Activated naive CD4-positive, alpha-beta T cell treated with anti-CD3 and anti-CD28 coated beads for 36 hours (primary cell): ENCODE measurements at regions of chr4 and their contacts with region 1.

Region 1: DNA sequence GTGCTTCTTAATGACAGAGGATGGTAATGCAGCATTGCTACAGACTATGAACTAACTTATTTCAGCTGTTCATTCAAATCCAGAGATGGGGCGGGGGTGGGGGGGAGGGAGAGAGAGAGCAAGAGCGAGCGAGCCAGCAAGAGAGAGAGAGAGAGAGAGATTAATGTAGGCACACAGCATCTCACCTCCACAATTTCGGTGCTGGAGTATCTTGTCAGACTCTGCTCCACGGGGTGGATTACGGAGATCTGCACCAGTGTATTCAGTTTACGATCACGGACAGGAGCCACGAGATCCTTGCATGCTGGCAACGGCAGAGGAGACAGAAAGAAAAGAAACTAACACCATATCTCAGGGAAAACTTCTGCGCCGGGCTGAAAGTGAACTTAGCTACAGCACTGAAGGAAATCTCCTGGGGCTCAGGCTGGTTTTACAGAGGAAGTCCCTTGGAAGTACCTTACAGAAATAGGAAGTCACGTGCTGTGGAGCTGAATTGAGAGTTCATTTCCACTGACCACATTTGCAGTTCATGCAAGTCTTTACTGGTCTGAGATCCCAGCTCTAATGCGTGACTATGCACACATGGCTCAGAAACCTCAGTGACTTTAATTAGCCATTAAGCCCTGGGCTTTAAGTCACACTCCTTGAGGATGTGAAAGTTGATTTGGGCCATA is 440.9 kb downstream of the INPP4B start:
- DNase-seq: peak; percentile 75
- H3K4me3 Mint-ChIP-seq: peak overlapping the region; percentile 99
- H3K27ac Mint-ChIP-seq: peak overlapping the region; percentile 100
- H3K4me1 Mint-ChIP-seq: peaks cover 53% of the 10 kb centered on the region
- H3K27me3 Mint-ChIP-seq: no peaks in the 10 kb centered on the region

Region 2: DNA sequence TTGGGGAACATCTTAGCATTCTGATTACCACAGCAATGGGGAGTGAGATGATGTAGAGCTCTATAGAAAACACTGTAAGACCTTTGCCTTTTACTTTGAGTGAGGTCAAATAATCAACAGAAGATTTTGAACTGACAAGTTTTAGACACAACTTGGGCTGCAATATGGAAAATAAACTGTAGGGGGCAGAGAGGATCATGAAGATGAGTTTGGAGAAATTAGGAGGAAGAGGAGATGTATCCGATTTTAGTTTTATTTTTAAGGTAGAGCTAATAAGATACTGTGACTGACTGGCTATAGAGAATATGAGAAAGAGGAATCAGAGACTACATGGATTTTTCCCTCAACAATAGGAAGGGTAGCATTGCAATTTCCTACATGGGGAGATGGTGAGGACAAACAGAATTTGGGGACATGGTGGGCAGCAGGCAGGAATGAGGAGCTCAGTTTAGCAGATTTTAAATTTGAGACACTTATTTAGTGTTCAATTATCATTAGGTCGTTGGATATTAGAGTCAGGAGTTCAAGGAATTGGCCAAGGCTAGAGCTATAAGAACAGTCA is 122.2 kb before region 1 on chr4:
- CTCF ChIA-PET with region 1: interaction called, 4 read pairs
- intact Hi-C with region 1: loop called (anchors 2 kb)
- DNase-seq: peak; percentile 60
- H3K4me3 Mint-ChIP-seq: no peak overlapping the region
- H3K27ac Mint-ChIP-seq: no peak overlapping the region
- H3K4me1 Mint-ChIP-seq: peaks cover 29% of the 10 kb centered on the region
- H3K27me3 Mint-ChIP-seq: no peaks in the 10 kb centered on the region

Region 3: DNA sequence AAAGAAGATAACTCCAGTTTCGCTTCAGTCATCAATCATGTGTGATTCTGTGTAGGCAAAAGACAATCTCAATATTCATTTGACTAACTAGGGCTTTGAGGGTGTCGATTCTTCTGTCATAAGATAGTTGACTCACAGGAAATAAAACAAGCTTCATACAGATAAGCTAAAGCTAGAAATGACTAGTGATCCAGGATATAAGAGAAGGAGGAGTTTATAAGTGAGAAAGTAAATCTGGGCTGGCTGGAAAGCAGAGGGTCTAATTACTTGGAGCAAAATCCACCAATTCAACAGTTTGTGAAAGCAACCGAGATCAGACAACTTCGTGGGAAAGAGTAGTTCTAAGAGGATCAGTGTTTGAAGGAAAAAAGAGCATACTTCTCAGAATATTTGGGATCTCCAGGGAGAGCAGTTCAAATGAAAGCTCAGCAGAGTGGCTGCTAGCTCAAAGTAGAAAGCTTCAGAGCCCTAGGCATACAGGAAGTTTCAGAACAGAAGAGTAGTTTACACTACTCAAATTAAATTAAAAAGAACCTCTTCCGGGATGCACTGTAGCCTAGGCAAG is 11.6 kb after region 1 on chr4:
- CTCF ChIA-PET with region 1: interaction called, 45 read pairs
- intact Hi-C with region 1: loop called (anchors 1 kb)
- DNase-seq: peak; percentile 36
- H3K4me3 Mint-ChIP-seq: peak overlapping the region; percentile 62
- H3K27ac Mint-ChIP-seq: peak overlapping the region; percentile 95
- H3K4me1 Mint-ChIP-seq: peaks cover 66% of the 10 kb centered on the region
- H3K27me3 Mint-ChIP-seq: no peaks in the 10 kb centered on the region

Region 4: DNA sequence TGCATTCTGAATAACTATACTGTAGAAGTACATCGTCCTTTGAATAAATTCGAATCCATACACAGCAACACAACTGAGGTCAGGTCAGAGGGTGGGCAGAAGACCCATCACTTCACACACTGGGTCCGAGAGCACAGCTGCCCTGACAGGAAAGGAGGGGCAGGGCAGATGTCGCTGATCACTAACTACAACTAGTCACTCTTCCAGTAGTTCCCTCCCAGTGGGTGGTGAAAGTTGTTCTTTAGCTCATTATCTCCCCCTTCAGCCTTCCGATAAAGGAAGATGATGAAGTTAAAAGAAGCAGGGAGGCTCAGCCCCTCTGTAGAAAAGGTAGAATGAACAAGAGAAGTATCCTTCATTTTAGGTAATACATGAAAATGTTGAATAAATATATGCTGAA is 162.0 kb after region 1 on chr4:
- CTCF ChIA-PET with region 1: interaction called, 27 read pairs
- intact Hi-C with region 1: loop called (anchors 1 kb)
- DNase-seq: peak; percentile 77
- H3K4me3 Mint-ChIP-seq: peak overlapping the region; percentile 77
- H3K27ac Mint-ChIP-seq: peak overlapping the region; percentile 94
- H3K4me1 Mint-ChIP-seq: peaks cover 48% of the 10 kb centered on the region
- H3K27me3 Mint-ChIP-seq: no peaks in the 10 kb centered on the region

Region 5: GRCh38 chr4:142719854-142720541 is 314.8 kb after region 1 on chr4:
- CTCF ChIA-PET with region 1: interaction called, 6 read pairs
- intact Hi-C with region 1: loop called (anchors 1 kb)
- DNase-seq: no peak
- H3K4me3 Mint-ChIP-seq: no peak overlapping the region
- H3K27ac Mint-ChIP-seq: peak overlapping the region; percentile 84
- H3K4me1 Mint-ChIP-seq: peaks cover 42% of the 10 kb centered on the region
- H3K27me3 Mint-ChIP-seq: no peaks in the 10 kb centered on the region

Region 6: GRCh38 chr4:142840516-142841123 is 435.5 kb after region 1 on chr4:
- CTCF ChIA-PET with region 1: interaction called, 5 read pairs
- intact Hi-C with region 1: loop called (anchors 2 kb)
- DNase-seq: no peak
- H3K4me3 Mint-ChIP-seq: no peak overlapping the region
- H3K27ac Mint-ChIP-seq: no peak overlapping the region
- H3K4me1 Mint-ChIP-seq: peaks cover 31% of the 10 kb centered on the region
- H3K27me3 Mint-ChIP-seq: no peaks in the 10 kb centered on the region